Dendritic cell treated with granulocyte-macrophage colony-stimulating factor and Interleukin-4, amounts not matched to agents 40 ng/mL and 50 ng/mL, for 4 days (primary cell): ENCODE measurements at regions of chr10 and their contacts with region 1.

Region 1: DNA sequence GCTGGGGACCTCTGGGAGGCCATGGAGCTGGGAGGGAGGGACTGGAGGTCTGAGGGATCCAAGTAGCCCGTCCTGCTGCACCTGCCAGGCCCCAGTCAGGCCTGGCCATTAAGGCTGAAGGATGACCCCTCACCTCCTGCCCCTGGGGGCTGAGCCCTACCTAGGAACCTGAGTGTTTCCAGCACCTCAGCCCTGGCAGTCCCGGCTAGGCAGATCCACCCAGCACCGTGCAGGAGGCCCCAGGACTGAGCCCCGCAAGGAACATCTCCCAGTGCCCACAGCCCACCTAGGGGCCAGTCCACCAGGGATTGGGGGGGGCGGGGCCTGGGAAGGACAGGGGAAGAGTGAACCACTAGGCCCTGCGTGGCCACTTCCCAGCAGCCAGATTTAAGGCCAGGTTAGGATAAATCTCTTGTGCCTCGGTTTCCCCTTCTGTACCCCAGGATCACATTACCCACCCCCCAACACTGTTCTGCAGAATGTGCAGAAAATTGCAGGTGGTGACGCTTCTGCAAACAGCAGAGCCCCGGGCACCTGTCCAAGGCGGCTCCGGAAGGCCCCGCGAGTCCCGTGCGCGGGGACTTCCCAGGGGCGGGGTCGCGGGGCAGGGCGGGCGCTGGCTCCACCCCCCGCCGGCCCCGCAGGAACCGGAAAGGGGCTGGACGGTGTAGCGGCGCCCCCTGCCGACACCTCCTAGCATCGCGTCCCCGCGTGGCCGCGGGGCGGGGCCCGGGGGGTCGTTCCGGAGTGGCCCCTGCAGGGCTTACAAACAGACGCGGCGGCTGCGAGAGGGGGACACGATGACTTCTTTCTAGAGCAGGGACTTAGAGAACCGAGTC is 55.9 kb downstream of the PWWP2B start:
- H3K4me3 Mint-ChIP-seq: peak overlapping the region; percentile 42
- H3K27ac Mint-ChIP-seq: peak overlapping the region; percentile 56
- H3K4me1 Mint-ChIP-seq: peaks cover 41% of the 10 kb centered on the region
- H3K27me3 Mint-ChIP-seq: peaks cover 14% of the 10 kb centered on the region

Region 2: GRCh38 chr10:132223156-132223590 is 229.7 kb before region 1 on chr10:
- intact Hi-C with region 1: loop called (anchors 1 kb)
- H3K4me3 Mint-ChIP-seq: peak overlapping the region; percentile 52
- H3K27ac Mint-ChIP-seq: peak overlapping the region; percentile 82
- H3K4me1 Mint-ChIP-seq: peaks cover 6% of the 10 kb centered on the region
- H3K27me3 Mint-ChIP-seq: no peaks in the 10 kb centered on the region

Region 3: DNA sequence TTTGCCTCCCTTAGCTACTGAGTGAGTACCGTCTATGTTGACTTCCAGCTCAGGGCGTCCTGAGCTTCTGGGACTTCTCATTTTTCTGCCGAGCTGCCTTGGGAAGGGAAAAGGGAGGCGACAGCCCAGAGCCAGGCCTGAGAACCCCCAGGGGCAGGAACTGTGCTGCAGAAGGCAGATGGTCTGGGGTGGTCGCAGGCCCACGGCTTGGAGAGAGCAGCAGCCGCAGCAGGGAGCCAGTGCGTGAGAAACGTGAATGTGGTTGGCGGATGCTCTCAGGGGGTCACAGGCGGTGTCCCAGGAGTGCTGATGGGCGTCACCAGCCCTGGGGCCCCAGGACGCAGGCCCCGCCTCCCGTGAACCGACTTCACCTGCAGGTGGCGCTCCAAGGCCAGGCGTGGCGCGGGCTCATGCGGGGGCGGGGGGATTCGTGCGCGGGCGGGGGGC is 65.1 kb before region 1 on chr10:
- intact Hi-C with region 1: loop called (anchors 1 kb)
- H3K4me3 Mint-ChIP-seq: peak overlapping the region; percentile 66
- H3K27ac Mint-ChIP-seq: peak overlapping the region; percentile 88
- H3K4me1 Mint-ChIP-seq: peaks cover 49% of the 10 kb centered on the region
- H3K27me3 Mint-ChIP-seq: peaks cover 35% of the 10 kb centered on the region